Activated CD8-positive, alpha-beta T cell treated with anti-CD3 and anti-CD28 coated beads for 36 hours (primary cell): ENCODE measurements at regions of chr17 and their contacts with region 1.

Region 1: DNA sequence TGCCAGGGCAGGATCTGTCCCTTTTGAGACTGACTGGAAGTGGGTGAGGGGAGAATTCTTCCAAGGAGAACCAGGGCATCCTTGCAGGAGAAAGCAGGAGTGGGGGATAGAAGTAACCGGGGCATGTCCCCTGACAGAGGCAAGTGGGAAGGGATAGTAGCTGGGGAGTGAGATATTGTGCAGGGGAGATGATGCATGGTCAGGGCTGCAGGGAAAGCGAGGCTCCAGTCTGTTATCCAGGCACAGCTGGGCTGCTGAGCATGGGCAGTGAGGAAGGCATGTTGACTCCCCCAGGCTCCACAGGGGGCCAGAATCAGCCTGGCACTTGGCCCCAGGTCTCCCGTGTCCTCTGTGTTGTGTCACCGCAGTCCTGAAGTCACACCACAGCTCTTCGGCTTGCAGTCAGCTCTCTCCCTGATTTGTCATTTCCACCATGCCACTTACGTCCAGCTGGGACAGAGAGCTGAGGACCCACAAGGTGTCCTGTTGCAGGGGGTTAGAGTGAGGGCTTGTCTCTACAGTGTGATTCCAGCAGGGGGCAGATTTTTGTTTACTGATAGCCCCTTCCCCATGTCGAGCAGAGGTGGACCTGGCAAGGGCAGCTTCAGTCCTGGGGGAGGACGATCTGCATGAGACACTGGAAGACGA is 40.9 kb downstream of the B9D1 start:
- DNase-seq: no peak
- ATAC-seq: no peak
- H3K4me3 Mint-ChIP-seq: no peak overlapping the region
- H3K27ac Mint-ChIP-seq: no peak overlapping the region
- H3K4me1 Mint-ChIP-seq: no peaks in the 10 kb centered on the region
- H3K27me3 Mint-ChIP-seq: peaks cover 8% of the 10 kb centered on the region
- CTCF ChIP-seq: no peak

Region 2: DNA sequence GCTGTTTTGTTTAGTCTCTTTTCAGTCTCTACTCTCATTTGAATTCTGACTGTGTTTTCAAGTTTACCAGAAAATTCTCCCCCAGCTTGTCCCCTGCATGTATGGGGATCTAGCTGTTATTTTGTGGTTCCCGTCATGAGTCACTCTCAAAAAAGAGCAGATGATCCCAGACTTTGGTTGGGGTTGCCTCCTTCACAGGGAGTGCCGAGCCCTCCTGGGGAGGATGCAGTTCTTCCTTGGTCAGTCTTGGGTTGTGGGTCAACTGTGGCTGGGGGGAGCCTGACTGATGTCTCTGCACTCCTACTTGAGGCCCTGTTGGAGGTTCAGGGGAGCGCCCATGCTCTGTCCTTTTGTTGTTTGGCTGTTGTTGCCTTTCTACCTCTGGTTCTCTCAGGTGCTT is 46.7 kb before region 1 on chr17:
- CTCF ChIA-PET with region 1: no interaction called
- POLR2A ChIA-PET with region 1: no interaction called
- intact Hi-C with region 1: no loop called
- DNase-seq: no peak
- ATAC-seq: no peak
- H3K4me3 Mint-ChIP-seq: no peak overlapping the region
- H3K27ac Mint-ChIP-seq: no peak overlapping the region
- H3K4me1 Mint-ChIP-seq: no peaks in the 10 kb centered on the region
- H3K27me3 Mint-ChIP-seq: peaks cover 3% of the 10 kb centered on the region
- CTCF ChIP-seq: no peak

Region 3: GRCh38 chr17:19286751-19287341 is 34.8 kb before region 1 on chr17:
- CTCF ChIA-PET with region 1: no interaction called
- POLR2A ChIA-PET with region 1: no interaction called
- intact Hi-C with region 1: no loop called
- DNase-seq: no peak
- ATAC-seq: no peak
- H3K4me3 Mint-ChIP-seq: no peak overlapping the region
- H3K27ac Mint-ChIP-seq: no peak overlapping the region
- H3K4me1 Mint-ChIP-seq: peaks cover 20% of the 10 kb centered on the region
- H3K27me3 Mint-ChIP-seq: peaks cover 7% of the 10 kb centered on the region
- CTCF ChIP-seq: no peak

Region 4: DNA sequence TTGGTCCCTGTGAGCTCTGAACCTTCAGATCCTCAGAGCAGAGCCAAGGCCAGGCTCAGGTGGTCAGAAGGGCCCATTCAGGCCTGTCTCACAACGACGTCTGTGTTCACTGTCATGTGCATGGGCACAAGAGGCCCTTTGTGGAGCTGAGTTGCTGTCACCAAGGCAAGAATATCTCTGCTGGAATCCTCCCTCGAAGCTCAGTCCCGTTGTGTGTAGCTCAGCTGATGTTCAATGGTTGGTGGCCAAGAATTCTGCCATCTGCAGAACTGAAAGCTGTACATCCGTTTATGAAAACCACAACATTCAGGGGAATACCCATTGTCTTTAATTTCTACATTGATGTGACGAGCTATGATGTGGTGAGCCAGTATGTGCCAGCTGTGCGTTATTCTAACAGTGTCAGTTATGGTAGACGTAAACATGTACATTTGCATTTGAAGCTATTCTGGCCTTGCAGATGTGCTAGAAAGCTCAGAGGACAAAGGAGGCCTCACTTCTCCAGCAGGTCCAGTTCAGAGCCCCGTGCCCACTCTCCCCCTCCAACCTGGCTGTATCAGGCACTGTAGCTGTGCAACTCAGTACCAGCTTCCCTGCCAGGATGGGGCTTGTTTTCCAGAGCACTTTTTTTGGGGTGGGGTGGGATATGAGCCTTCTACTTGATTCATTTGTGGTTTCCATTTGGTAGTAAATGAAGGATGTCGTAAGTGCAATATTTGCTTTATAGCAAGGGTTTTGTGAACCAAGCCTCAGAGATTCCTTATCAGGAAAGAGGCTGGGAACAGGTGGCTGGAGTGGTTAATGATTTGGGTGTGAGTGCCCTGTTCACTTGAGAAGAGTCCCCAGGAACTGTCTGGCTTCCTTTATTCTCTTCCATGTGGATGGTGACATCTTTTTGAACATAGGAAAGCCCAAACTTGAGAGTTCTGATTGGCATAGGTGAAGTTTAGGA is 15.2 kb before region 1 on chr17:
- CTCF ChIA-PET with region 1: interaction called, 11 read pairs
- POLR2A ChIA-PET with region 1: no interaction called
- intact Hi-C with region 1: no loop called
- DNase-seq: peak; percentile 72
- ATAC-seq: peak; percentile 94
- H3K4me3 Mint-ChIP-seq: no peak overlapping the region
- H3K27ac Mint-ChIP-seq: no peak overlapping the region
- H3K4me1 Mint-ChIP-seq: peaks cover 22% of the 10 kb centered on the region
- H3K27me3 Mint-ChIP-seq: peaks cover 38% of the 10 kb centered on the region
- CTCF ChIP-seq: no peak